ENCODE measurements at regions of chr2 and their contacts with region 1.

Region 1: DNA sequence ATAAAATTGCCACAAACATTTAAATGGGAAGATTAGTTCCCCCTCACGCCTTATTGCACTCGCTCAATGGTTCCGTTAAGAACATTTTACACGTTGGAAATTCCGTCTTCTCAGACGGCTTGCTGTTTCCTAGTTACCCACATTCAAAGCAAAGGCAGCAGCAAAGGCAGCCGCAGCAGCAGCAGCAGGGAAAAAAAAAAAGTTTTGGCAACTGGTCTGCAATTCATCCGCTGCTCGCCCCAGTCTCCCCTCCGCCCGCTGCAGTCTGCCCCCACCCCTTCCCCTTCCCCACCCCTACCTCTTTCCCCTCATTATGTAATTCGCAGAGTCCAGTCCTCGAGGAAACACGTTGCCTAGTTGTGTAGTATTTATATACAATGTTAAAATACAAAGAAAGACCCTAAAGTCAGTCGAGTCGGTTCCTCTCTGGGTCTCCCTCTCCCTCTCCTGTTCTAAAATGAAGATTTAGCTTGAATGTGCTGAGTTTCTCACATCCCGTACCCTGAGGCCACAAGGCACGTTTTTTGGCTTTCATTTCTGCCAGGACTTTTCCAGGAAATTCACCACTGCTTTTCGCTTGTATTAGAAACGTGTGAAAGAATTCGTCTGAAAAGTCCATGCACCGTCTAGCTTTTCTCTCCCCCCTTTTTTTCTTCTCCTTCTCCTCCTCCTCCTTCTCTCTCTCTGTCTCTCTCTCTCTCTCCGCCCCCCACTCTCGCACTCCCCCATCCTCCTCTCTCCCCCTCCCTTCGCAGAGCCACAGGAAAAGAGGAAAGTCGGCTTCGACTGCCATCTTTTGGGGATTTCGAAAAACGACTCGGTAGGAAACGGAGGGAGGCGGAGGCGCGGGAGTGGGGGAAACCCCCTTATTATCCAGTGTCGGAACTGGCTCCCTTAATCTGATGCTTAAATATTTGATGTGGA is 140.0 kb downstream of the MEIS1 start:
- DNase-seq: peak; percentile 92
- H3K4me3 ChIP-seq: peak overlapping the region; percentile 52 to 73 (median 68)
- H3K27ac ChIP-seq: peak overlapping the region; percentile 95 to 99 (median 98)
- H3K4me1 ChIP-seq: peaks cover 0 to 58% (median 42%) of the 10 kb centered on the region in 4 donors
- H3K27me3 ChIP-seq: peaks cover 0 to under 1% (median 0%) of the 10 kb centered on the region in 3 donors
- CTCF ChIP-seq: peak in 3 of 4 experiments; percentile 29 to 40 (median 34)
- EP300 ChIP-seq: no peak
- POLR2A ChIP-seq: no peak

Region 2: DNA sequence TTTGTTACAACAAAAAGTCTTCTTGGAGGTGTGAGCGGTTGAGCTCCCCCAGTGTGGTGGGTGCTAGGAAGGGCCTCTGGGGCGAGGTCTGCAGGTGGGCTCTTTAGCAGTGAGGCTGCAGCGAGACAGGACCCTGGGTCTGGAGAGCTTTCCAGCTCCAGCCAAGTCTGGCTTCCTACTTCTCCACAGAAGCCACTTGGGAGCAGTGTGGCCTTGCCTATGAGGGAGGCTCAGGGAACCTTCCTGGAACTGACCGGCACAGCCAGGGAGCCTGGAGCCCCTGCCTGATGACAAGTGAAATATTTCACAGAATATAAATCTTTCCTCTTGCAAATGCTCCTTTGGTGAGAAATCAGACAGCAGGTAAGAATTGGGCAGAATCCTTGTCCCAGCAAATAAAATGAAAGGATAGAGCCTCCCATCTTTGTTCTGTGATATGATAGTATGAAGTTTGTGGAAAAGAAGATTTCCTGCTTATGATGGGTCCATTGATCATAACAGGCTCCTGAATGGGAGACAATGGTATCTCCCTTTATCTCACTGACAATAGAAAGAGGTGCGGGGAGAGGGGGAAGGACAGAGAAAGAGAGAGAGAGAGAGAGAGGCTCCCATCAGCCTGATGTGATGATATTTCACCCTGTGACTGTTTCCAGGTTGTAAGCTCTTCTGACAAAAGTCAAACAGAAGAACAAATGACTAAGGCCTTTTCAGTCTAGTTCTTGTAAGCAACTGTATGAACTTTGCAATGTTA is 852.8 kb before region 1 on chr2:
- intact Hi-C with region 1: loop called (anchors 5 kb)
- DNase-seq: peak; percentile 81
- H3K4me3 ChIP-seq: no peak overlapping the region
- H3K27ac ChIP-seq: no peak overlapping the region
- H3K4me1 ChIP-seq: peaks cover 0 to 6% (median 0%) of the 10 kb centered on the region in 4 donors
- H3K27me3 ChIP-seq: no peaks in the 10 kb centered on the region
- CTCF ChIP-seq: peak in 3 of 4 experiments; percentile 9 to 37 (median 29)
- EP300 ChIP-seq: no peak
- POLR2A ChIP-seq: no peak

Region 3: DNA sequence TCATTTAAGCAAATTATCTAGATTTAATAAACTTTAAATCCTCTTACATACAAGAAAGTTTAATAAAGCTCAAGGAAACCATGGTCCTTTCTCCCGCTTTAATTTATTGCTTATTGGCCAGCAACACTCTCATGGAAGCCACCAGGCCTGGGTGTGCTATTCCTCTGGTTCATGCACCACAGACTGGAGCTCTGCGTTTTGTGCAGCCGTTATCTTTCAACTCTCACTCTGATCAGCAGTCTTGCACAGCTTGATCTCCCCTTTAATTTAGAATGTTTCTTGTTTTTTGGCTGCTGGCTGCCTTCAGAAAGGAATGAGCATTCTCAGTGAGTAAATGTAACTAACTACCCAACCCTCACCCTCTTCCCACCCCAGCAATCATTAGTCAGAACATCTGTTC is 178.7 kb after region 1 on chr2:
- intact Hi-C with region 1: no loop called
- DNase-seq: peak; percentile 71
- H3K4me3 ChIP-seq: no peak overlapping the region
- H3K27ac ChIP-seq: peak overlapping the region; percentile 28 to 80 (median 66)
- H3K4me1 ChIP-seq: peaks cover 0 to 63% (median 45%) of the 10 kb centered on the region in 4 donors
- H3K27me3 ChIP-seq: no peaks in the 10 kb centered on the region
- CTCF ChIP-seq: no peak
- EP300 ChIP-seq: no peak
- POLR2A ChIP-seq: no peak

Region 4: DNA sequence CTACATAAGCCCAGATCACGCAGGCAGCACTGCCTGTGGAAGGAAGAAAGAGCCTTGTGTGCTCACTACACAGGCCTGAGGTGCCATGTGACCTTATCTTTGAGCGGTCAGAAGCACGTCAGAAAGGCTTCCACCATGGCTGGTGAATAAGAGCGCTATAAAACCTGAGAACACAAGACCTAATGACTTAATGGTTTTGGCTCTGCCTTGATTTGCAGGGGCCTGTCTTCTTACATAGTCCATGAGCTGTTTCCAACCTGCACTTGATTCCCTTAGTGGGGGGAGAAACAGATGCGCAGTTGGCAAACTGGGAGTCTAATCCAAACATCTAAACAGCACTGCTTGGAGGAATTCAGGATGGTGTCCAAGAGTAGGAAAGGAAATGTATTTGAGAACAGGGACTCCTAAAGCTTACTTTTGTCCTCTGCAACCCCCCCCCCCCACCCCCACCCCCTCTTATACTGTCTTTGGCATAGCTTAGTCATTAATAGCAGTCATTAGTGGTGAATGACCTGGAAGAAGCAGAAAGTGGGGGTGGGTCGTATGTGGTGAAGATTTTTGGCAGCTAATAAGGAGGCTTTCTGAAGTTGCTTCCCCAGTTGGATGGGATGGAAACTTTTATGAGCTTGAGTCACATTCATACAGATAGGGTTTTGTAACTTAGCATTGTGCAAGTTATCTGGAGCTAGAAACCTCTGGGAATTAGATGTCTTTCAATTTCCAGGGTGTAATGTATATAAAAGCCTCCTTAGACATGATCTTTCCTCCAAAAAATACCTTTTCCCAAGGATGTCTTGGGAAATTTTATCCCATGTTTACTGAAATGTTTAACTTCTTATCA is 314.0 kb after region 1 on chr2:
- intact Hi-C with region 1: loop called (anchors 2 kb)
- DNase-seq: peak; percentile 95
- H3K4me3 ChIP-seq: no peak overlapping the region
- H3K27ac ChIP-seq: peak overlapping the region; percentile 27 to 91 (median 83)
- H3K4me1 ChIP-seq: peaks cover 0 to 68% (median 45%) of the 10 kb centered on the region in 4 donors
- H3K27me3 ChIP-seq: no peaks in the 10 kb centered on the region
- CTCF ChIP-seq: no peak
- EP300 ChIP-seq: peak; percentile 97 to 98 (median 98)
- POLR2A ChIP-seq: peak in 1 of 2 donors; percentile 4

Region 5: DNA sequence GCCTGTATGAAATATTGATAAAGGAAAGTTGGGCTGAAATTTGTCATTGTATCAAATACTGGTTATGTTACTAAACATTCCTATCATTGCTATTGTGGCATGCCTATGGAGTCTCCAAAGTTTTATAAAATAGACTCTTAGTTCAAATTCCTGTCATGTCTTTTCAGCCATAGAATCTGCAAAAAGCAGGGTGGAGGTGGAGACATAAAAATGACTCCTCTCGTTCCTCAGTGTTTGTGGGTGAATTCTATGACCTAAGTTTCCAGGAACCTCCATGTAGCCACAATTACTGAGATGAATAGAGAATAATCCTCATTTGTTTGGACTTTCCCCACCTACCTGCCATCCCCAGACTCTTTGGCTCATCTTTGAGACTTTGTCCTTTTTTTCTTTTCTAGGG is 495.9 kb after region 1 on chr2:
- intact Hi-C with region 1: loop called (anchors 5 kb)
- DNase-seq: no peak
- H3K4me3 ChIP-seq: no peak overlapping the region
- H3K27ac ChIP-seq: no peak overlapping the region
- H3K4me1 ChIP-seq: peaks cover 0 to 20% (median 7%) of the 10 kb centered on the region in 4 donors
- H3K27me3 ChIP-seq: no peaks in the 10 kb centered on the region
- CTCF ChIP-seq: no peak
- EP300 ChIP-seq: no peak
- POLR2A ChIP-seq: no peak

Region 6: DNA sequence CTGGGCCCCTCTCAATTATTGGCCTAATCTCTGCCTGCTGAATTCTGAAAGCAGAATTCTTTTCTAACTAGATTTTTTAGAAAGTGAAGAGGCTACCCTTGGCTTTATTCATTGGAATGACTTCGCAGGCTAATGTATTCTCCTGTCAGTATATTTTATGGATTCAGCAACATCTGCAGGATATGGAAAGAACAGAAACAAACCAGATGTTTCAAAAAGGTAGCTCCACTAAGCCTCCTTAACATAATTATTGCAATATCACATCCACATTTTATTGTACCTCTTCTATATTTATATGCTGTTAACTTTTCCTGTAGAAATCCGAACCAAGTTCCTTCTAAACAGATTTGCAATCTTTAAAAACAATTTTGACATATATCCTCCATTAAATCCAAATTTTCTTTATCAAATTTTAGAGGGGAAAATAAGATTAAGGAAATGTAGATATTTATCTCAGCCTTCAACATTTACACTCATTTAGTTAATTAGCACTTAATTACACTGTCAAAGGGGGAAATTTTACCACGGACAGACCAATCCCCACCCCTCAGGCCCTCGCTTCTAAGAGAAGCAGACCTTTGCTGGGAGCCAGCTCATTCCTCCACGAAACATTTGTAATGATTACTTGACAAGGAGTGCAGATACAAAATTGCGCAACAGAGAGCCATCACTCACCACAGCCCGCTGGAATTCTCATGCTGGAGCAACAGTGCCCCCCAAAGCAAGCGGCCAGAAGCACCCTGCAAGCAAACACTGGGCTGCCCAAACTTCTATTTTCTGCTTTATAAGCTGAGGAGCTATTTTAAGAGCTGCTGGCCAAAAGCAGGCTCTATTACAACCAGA is 1075.5 kb after region 1 on chr2:
- intact Hi-C with region 1: loop called (anchors 2 kb)
- DNase-seq: peak; percentile 96
- H3K4me3 ChIP-seq: peak overlapping the region in 1 of 4 donors; percentile 1
- H3K27ac ChIP-seq: peak overlapping the region; percentile 72 to 91 (median 83)
- H3K4me1 ChIP-seq: peaks cover 0 to 41% (median 32%) of the 10 kb centered on the region in 4 donors
- H3K27me3 ChIP-seq: no peaks in the 10 kb centered on the region
- CTCF ChIP-seq: peak; percentile 55 to 77 (median 66)
- EP300 ChIP-seq: peak in 3 of 4 donors; percentile 11 to 72 (median 63)
- POLR2A ChIP-seq: no peak

Region 7: GRCh38 chr2:68031542-68032160 is 1456.7 kb after region 1 on chr2:
- intact Hi-C with region 1: loop called (anchors 10 kb)
- DNase-seq: no peak
- H3K4me3 ChIP-seq: no peak overlapping the region
- H3K27ac ChIP-seq: no peak overlapping the region
- H3K4me1 ChIP-seq: peaks cover 0 to 8% (median 3%) of the 10 kb centered on the region in 4 donors
- H3K27me3 ChIP-seq: no peaks in the 10 kb centered on the region
- CTCF ChIP-seq: peak; percentile 47 to 67 (median 59)
- EP300 ChIP-seq: no peak
- POLR2A ChIP-seq: no peak

Measured in sigmoid colon (tissue), 7 donors.